Transverse colon (tissue), 4 donors: ENCODE measurements at regions of chr2 and their contacts with region 1.

Region 1: DNA sequence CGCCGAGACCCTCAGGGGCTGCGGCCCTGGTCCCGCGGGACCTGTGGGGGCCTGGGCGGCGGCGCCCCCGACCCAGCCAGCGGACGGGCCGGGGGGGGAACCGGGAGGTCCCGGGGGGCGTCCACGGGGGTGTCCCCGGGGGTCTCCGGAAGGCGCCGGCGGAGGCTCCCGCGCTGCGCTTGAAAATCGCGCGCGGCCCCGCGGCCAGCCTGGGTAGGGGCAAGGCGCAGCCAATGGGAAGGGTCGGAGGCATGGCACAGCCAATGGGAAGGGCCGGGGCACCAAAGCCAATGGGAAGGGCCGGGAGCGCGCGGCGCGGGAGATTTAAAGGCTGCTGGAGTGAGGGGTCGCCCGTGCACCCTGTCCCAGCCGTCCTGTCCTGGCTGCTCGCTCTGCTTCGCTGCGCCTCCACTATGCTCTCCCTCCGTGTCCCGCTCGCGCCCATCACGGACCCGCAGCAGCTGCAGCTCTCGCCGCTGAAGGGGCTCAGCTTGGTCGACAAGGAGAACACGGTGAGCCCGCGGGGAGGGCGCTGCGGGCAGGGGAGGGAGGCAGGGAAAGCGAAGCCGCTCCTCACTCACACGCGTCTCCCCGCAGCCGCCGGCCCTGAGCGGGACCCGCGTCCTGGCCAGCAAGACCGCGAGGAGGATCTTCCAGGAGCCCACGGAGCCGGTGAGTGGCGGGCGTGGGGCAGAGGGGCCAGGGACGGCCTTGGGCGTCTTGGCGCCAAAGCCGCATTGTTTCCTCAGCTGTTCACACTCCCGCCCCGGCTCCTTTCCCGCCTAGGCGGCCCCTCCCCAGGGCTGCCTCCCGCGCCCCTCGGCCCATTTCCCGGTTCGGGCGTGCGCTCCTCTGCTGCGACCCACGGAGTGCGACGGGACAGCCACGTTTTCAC is at the start of gene RRM2:
- DNase-seq: peak; percentile 94
- H3K4me3 ChIP-seq: peak within 1 kb of the TSS; percentile 43 to 65 (median 59)
- H3K27ac ChIP-seq: peak within 1 kb of the TSS; percentile 82 to 87 (median 86)
- H3K4me1 ChIP-seq: peaks cover 23 to 63% (median 44%) of the 10 kb centered on the region in 4 donors
- H3K27me3 ChIP-seq: peaks cover 15% of the 10 kb centered on the region
- CTCF ChIP-seq: no peak
- EP300 ChIP-seq: no peak
- POLR2A ChIP-seq: no peak
- total RNA-seq, gene RRM2: 4.0 to 12.9 (median 5.3) TPM in 3 of 4 donors, not detected in the other

Region 2: GRCh38 chr2:8457699-8458502 is 1664.7 kb before region 1 on chr2:
- in situ Hi-C with region 1: no loop called
- intact Hi-C with region 1: no loop called
- DNase-seq: peak; percentile 71
- H3K4me3 ChIP-seq: peak overlapping the region in 3 of 4 donors; percentile 17 to 42 (median 19)
- H3K27ac ChIP-seq: peak overlapping the region; percentile 40 to 74 (median 67)
- H3K4me1 ChIP-seq: peaks cover 0 to 20% (median 13%) of the 10 kb centered on the region in 4 donors
- H3K27me3 ChIP-seq: peaks cover 12% of the 10 kb centered on the region
- CTCF ChIP-seq: no peak
- EP300 ChIP-seq: peak; percentile 30
- POLR2A ChIP-seq: no peak

Region 3: GRCh38 chr2:10220902-10221391 is 98.3 kb after region 1 on chr2:
- in situ Hi-C with region 1: no loop called
- intact Hi-C with region 1: no loop called
- DNase-seq: no peak
- H3K4me3 ChIP-seq: no peak overlapping the region
- H3K27ac ChIP-seq: no peak overlapping the region
- H3K4me1 ChIP-seq: peaks cover 0 to 10% (median 6%) of the 10 kb centered on the region in 4 donors
- H3K27me3 ChIP-seq: no peaks in the 10 kb centered on the region
- CTCF ChIP-seq: no peak
- EP300 ChIP-seq: no peak
- POLR2A ChIP-seq: no peak

Region 4: DNA sequence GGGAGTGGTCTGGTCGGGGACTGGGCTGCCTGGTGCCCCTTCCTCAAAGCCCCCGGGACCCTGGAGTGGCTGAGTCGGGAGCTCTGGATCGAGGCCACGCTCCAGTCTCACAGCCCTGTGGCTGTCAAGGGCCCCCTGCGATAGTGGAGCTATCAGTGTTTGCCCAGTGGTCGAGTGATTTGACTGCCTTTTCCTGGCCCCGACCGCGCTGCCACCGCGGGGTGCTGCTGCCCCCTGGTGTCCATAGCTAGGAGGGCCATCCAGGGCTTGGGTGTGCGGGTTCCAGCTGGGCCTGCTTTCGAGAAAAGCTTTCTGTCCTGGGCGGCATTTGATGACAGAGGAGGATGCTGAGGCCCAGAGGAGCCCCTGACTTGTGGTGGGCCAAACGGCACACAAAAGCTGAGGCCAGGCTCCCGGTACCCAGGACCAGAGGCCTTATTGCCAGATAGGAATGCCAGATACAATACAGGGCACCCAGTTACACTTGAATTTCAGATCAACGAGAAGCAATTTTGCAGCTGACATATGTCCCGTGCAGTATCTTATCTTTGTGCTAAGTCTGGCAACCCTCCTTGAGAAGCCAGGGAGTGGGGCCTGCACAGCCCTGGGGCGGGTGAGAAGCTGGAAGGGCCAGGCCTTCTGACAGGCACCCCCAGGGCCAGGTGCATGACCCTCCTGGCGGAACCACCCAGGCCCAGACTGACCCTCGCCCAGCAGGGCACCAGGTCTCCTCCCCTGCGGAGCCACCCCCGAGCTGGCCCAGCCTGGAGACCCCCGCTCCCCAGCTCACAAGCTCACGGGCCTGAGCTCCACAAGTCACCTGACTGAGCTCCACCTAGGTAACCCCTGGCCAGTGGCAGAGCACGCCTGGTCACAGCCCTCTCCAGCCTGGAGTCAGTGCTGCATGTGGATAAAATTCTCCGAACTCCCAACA is 312.5 kb after region 1 on chr2:
- in situ Hi-C with region 1: loop called in 1 of 4 experiments (anchors 10 kb)
- intact Hi-C with region 1: loop called (anchors 5 kb)
- DNase-seq: peak; percentile 81
- H3K4me3 ChIP-seq: no peak overlapping the region
- H3K27ac ChIP-seq: no peak overlapping the region
- H3K4me1 ChIP-seq: peaks cover 0 to 23% (median 16%) of the 10 kb centered on the region in 4 donors
- H3K27me3 ChIP-seq: no peaks in the 10 kb centered on the region
- CTCF ChIP-seq: peak; percentile 96 to 98 (median 97)
- EP300 ChIP-seq: no peak
- POLR2A ChIP-seq: no peak

Region 5: GRCh38 chr2:10659898-10660568 is 537.4 kb after region 1 on chr2:
- in situ Hi-C with region 1: loop called in 2 of 4 experiments (anchors 25 kb)
- intact Hi-C with region 1: no loop called
- DNase-seq: peak; percentile 56
- H3K4me3 ChIP-seq: no peak overlapping the region
- H3K27ac ChIP-seq: no peak overlapping the region
- H3K4me1 ChIP-seq: no peaks in the 10 kb centered on the region
- H3K27me3 ChIP-seq: no peaks in the 10 kb centered on the region
- CTCF ChIP-seq: peak; percentile 55 to 77 (median 66)
- EP300 ChIP-seq: no peak
- POLR2A ChIP-seq: no peak